PC-9 (cell line): ENCODE measurements at regions of chr3 and their contacts with region 1.

Region 1: DNA sequence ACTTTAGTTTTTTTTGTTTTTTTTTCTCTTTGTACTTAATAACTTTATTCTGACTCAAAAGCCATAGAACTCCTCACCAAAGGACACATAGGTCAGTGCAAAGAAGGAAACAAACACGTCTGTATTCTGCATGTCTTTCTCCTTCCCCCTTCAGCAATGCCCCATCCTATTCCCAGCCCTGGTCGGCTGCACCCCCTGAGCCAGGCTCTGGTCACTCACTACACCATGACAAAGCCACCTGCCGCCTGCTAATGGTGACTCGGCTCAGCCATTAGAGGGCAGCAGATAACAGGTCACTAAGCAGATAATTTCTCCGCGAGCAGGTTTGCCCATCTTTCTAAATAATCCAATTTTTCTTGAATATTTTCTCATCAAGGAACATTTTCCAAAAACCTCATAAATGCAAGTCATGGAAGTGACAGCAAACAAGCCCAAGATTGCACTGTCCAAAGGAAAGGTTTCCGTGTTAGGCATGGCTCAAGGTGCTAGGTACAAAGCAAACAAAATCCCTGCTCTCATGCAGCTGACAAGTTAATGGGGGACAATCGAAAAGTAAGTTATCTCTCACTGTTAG is 37.8 kb downstream of the TM4SF4 start:
- DNase-seq: peak; percentile 53 to 73
- H3K4me3 ChIP-seq: no peak overlapping the region
- H3K27ac ChIP-seq: no peak overlapping the region
- H3K4me1 ChIP-seq: peaks cover 12% of the 10 kb centered on the region; the same call in 1 of the 2 replicates
- H3K27me3 ChIP-seq: no peaks in the 10 kb centered on the region
- CTCF ChIP-seq: peak; percentile 86

Region 2: GRCh38 chr3:149120051-149120972 is 392.0 kb before region 1 on chr3:
- CTCF ChIA-PET with region 1: no interaction called
- POLR2A ChIA-PET with region 1: no interaction called
- intact Hi-C with region 1: loop called (anchors 5 kb)
- DNase-seq: peak in 1 of 2 experiments; percentile 54
- H3K4me3 ChIP-seq: no peak overlapping the region
- H3K27ac ChIP-seq: no peak overlapping the region
- H3K4me1 ChIP-seq: no peaks in the 10 kb centered on the region
- H3K27me3 ChIP-seq: no peaks in the 10 kb centered on the region
- CTCF ChIP-seq: peak; percentile 76

Region 3: DNA sequence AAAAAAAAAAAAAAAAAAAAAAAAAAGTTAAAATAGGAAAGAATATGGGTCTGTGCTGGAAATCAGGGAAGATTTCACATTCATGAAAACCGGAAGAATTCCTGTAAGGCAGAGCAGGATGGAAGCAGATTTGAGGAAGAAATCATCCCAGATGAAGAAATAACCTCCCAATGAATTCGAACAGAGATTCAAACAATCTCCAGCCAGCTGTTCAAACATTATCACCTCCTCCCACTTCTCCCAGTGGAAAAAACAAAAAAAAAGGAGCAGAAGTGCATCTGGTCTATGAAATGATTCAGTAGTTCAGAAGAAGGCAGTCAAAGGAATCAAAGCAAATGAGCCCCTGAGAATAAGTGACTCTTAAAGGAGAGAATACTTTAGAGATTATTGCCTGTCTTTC is 323.8 kb before region 1 on chr3:
- CTCF ChIA-PET with region 1: no interaction called
- POLR2A ChIA-PET with region 1: no interaction called
- intact Hi-C with region 1: no loop called
- DNase-seq: no peak
- H3K4me3 ChIP-seq: no peak overlapping the region
- H3K27ac ChIP-seq: no peak overlapping the region
- H3K4me1 ChIP-seq: no peaks in the 10 kb centered on the region
- H3K27me3 ChIP-seq: no peaks in the 10 kb centered on the region
- CTCF ChIP-seq: no peak

Region 4: GRCh38 chr3:149473357-149474249 is 38.7 kb before region 1 on chr3:
- CTCF ChIA-PET with region 1: no interaction called
- POLR2A ChIA-PET with region 1: no interaction called
- intact Hi-C with region 1: no loop called
- DNase-seq: peak; percentile 88 to 99
- H3K4me3 ChIP-seq: 0 out of 2 replicates have a peak overlapping the region, but pooled peaks have one; percentile 10
- H3K27ac ChIP-seq: peak overlapping the region; percentile 73
- H3K4me1 ChIP-seq: peaks cover 47% of the 10 kb centered on the region
- H3K27me3 ChIP-seq: no peaks in the 10 kb centered on the region
- CTCF ChIP-seq: no peak

Region 5: GRCh38 chr3:149585401-149585726 is 73.1 kb after region 1 on chr3:
- CTCF ChIA-PET with region 1: no interaction called
- POLR2A ChIA-PET with region 1: no interaction called
- intact Hi-C with region 1: no loop called
- DNase-seq: no peak
- H3K4me3 ChIP-seq: no peak overlapping the region
- H3K27ac ChIP-seq: 0 out of 2 replicates have a peak overlapping the region, but pooled peaks have one; percentile 15
- H3K4me1 ChIP-seq: peaks cover 82% of the 10 kb centered on the region
- H3K27me3 ChIP-seq: no peaks in the 10 kb centered on the region
- CTCF ChIP-seq: no peak

Region 6: DNA sequence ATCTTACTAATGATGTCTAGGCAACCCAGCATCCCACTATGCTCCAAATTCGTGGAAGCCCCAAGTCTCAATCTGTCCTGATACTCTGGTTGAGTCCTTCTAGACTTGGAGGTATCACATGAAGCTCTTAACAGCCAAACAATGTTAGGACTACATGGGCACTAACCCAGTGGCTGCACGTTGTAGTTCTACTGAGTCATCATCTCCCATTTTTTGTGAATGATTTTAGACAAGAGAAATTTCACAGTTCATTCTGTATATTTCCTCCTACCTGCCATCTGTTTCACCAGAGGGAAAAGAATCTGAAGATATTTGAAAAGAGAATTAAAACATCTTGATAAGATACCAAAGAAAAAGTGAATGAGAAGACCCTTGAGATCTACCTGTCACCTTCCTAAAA is 155.3 kb after region 1 on chr3:
- CTCF ChIA-PET with region 1: no interaction called
- POLR2A ChIA-PET with region 1: no interaction called
- intact Hi-C with region 1: no loop called
- DNase-seq: no peak
- H3K4me3 ChIP-seq: no peak overlapping the region
- H3K27ac ChIP-seq: no peak overlapping the region
- H3K4me1 ChIP-seq: peaks cover 7% of the 10 kb centered on the region; the same call in 1 of the 2 replicates
- H3K27me3 ChIP-seq: no peaks in the 10 kb centered on the region
- CTCF ChIP-seq: no peak

Region 7: DNA sequence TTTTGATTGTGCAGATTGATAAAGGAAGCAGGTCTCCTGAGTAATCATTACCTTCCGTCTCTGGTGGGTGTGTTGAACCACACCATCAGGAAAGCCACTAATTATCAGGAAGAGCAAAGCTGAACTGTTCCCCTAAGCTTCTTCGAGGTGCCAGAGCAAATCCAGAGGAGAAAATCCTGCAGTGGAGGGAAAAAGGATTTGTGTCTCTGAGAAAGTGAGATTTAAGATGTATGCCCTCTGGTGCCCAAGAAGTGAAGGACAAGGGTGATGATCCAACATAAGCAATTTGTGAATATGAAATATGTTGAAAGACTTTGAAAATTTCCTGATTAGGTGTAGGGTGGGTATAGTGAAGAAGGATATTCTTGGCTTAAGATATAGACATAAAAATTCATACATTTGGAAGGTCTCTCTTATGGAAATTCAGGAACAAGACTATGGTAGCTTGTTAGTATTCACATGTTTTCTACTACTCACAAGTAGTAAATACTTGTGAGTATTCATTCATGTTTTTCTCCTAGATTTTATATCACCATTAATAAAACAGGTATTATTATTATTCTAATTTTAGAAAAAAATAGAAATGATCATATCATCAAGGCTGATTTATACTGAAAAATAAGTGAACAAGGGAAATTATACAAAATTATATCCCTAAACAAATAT is 205.2 kb after region 1 on chr3:
- CTCF ChIA-PET with region 1: interaction called, 4 read pairs
- POLR2A ChIA-PET with region 1: no interaction called
- intact Hi-C with region 1: loop called (anchors 1 kb)
- DNase-seq: peak; percentile 58 to 61
- H3K4me3 ChIP-seq: no peak overlapping the region
- H3K27ac ChIP-seq: no peak overlapping the region
- H3K4me1 ChIP-seq: 0 out of 2 replicates have a peak, but pooled peaks cover 4% of the 10 kb centered on the region
- H3K27me3 ChIP-seq: no peaks in the 10 kb centered on the region
- CTCF ChIP-seq: peak; percentile 81

Region 8: DNA sequence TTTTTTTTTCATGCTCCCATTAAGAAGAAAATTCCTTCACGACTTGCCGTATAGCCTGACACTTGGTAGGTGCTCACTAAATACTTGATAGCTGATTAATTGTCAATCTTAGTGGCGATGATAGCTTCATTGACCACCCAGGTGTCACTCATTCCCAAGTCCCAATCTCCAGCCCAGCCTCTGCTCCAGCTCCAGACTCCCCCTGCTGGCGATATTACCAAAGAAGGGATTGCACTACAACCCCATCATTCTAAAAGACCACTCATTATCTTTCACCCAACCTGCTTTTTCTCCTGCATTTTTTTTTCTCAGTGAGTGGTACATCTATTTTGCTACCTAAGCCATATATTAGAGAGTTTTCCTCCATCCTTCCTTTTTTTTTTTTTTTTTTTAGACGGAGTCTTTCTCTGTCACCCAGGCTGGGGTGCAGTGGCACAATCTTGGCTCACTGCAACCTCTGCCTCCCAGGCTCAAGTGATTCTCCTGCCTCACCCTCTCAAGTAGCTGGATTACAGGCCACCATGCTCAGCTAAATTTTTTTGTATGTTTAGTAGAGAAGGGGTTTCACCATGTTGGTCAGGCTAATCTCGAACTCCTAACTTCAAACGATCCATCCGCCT is 259.5 kb after region 1 on chr3:
- CTCF ChIA-PET with region 1: no interaction called
- POLR2A ChIA-PET with region 1: no interaction called
- intact Hi-C with region 1: loop called (anchors 5 kb)
- DNase-seq: peak in 1 of 2 experiments; percentile 43
- H3K4me3 ChIP-seq: no peak overlapping the region
- H3K27ac ChIP-seq: no peak overlapping the region
- H3K4me1 ChIP-seq: no peaks in the 10 kb centered on the region
- H3K27me3 ChIP-seq: no peaks in the 10 kb centered on the region
- CTCF ChIP-seq: peak; percentile 85

Region 9: GRCh38 chr3:149850787-149851584 is 338.7 kb after region 1 on chr3:
- CTCF ChIA-PET with region 1: interaction called, 11 read pairs
- POLR2A ChIA-PET with region 1: no interaction called
- intact Hi-C with region 1: no loop called
- DNase-seq: no peak
- H3K4me3 ChIP-seq: no peak overlapping the region
- H3K27ac ChIP-seq: no peak overlapping the region
- H3K4me1 ChIP-seq: no peaks in the 10 kb centered on the region
- H3K27me3 ChIP-seq: no peaks in the 10 kb centered on the region
- CTCF ChIP-seq: no peak

Region 10: GRCh38 chr3:149964291-149964690 is 452.0 kb after region 1 on chr3:
- CTCF ChIA-PET with region 1: no interaction called
- POLR2A ChIA-PET with region 1: no interaction called
- intact Hi-C with region 1: loop called (anchors 5 kb)
- DNase-seq: no peak
- H3K4me3 ChIP-seq: no peak overlapping the region
- H3K27ac ChIP-seq: no peak overlapping the region
- H3K4me1 ChIP-seq: peaks cover 24% of the 10 kb centered on the region
- H3K27me3 ChIP-seq: no peaks in the 10 kb centered on the region
- CTCF ChIP-seq: no peak

Region 11: GRCh38 chr3:150216041-150216811 is 703.9 kb after region 1 on chr3:
- CTCF ChIA-PET with region 1: no interaction called
- POLR2A ChIA-PET with region 1: no interaction called
- intact Hi-C with region 1: loop called (anchors 5 kb)
- DNase-seq: peak; percentile 48 to 63
- H3K4me3 ChIP-seq: no peak overlapping the region
- H3K27ac ChIP-seq: no peak overlapping the region
- H3K4me1 ChIP-seq: peaks cover 10% of the 10 kb centered on the region
- H3K27me3 ChIP-seq: no peaks in the 10 kb centered on the region
- CTCF ChIP-seq: no peak; the same call in 1 of the 2 replicates